Activated CD4-positive, alpha-beta memory T cell treated with anti-CD3 and anti-CD28 coated beads for 36 hours (primary cell): ENCODE measurements at regions of chr2 and their contacts with region 1.

Region 1: DNA sequence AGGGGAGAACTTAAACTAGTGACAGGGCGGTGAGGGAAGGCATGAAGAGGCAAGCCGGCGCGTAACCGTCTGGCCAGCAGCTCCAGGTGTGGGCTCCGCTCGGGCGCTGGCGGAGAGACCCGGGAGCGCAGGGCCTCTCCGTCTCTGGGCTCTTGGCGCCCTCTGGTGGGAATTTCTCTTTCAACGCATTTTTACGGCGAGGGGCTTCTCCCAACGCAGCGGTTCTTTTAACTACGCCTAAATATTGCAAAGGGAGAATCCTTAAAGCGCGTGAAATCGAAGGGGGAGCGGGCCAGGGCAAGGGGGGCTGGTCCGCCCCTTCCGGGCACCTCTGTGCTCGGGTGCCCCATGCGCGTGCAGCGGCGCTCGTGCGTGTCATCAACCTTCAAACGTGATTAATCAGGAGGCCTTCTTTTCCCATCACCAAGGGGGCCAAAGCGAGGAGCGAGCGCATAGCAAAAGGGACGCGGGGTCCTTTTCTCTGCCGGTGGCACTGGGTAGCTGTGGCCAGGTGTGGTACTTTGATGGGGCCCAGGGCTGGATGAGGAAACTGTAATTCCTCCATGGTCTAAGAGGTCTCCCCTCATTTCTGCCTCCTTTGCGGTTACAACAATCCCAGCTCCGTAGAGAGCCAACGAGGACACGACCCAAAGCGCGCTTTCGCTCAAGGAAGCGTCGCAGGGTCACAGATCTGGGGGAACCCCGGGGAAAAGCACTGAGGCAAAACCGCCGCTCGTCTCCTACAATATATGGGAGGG is 762 bp upstream of the GAD1 start:
- DNase-seq: peak; percentile 78
- H3K4me3 Mint-ChIP-seq: peak overlapping the region; percentile 64
- H3K27ac Mint-ChIP-seq: peak overlapping the region; percentile 11
- H3K4me1 Mint-ChIP-seq: peaks cover 43% of the 10 kb centered on the region
- H3K27me3 Mint-ChIP-seq: peaks cover 72% of the 10 kb centered on the region

Region 2: DNA sequence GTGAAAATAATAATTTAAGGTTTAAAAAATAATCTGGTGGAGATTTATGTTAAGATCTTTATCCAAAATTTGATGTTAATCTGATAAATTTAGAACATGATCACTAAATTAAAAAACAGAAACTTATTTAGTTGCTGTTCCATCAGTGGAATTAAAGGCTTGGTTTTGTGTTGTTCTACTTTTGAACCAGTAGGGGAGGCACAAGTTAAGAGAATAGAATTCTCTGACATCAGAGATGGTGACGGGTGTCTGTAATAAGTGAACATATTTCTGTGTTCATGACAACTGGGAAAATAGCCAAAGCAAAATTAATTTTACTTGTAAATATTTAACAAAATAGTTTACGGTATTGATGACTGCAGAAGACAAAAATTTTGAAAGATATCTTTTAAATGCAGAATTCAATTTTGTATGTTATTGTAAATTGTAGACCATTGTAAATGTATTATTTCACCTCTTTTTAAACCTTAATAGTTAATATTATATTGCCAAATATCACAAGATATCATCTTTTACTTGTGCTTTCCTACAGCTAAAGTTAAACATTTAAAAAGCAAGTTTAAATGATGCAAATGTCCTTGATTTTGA is 882.7 kb before region 1 on chr2:
- CTCF ChIA-PET with region 1: interaction called, 3 read pairs
- POLR2A ChIA-PET with region 1: no interaction called
- intact Hi-C with region 1: loop called (anchors 10 kb)
- DNase-seq: no peak
- H3K4me3 Mint-ChIP-seq: no peak overlapping the region
- H3K27ac Mint-ChIP-seq: no peak overlapping the region
- H3K4me1 Mint-ChIP-seq: no peaks in the 10 kb centered on the region
- H3K27me3 Mint-ChIP-seq: no peaks in the 10 kb centered on the region

Region 3: DNA sequence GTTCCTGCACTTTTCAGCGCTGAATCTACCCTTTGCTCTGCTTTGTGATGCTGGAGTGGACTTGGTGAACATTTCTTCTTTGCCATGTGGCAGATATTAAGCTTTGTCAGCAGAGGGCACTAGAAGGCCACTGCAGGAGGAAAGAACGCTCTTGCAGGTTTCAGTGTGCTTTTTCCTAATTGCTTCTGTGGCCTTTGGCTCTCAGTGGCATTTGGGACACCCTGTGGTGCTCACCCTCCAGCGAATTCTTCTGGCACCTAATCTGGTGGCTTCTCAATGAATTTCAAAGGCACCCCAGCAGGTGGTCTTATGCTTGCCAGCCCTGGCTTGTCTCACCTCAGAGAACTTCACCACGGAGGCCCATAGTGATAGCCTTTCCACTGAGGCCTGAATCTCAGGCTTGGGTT is 491.3 kb before region 1 on chr2:
- CTCF ChIA-PET with region 1: interaction called, 26 read pairs
- POLR2A ChIA-PET with region 1: no interaction called
- intact Hi-C with region 1: loop called (anchors 2 kb)
- DNase-seq: peak; percentile 41
- H3K4me3 Mint-ChIP-seq: no peak overlapping the region
- H3K27ac Mint-ChIP-seq: no peak overlapping the region
- H3K4me1 Mint-ChIP-seq: no peaks in the 10 kb centered on the region
- H3K27me3 Mint-ChIP-seq: peaks cover 7% of the 10 kb centered on the region

Region 4: DNA sequence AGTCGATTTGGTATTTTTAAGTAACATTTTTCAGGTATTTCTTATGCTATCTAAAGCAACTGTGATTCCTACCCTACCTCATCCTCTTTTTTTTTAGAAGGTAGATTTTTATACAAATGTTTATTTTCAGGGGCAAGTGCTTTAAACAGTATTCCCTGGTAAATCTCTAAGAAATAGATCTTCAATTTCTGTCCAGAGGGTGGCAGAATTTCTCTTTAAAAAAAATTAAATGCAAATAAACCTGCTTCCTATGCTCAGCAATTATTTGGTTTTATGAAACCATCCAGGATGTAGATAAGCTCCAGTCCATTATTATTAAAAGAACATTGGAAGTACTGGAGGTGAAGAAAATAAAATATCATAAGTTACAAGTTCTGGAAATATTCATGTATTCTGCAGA is 446.0 kb before region 1 on chr2:
- CTCF ChIA-PET with region 1: interaction called, 29 read pairs
- POLR2A ChIA-PET with region 1: interaction called, 3 read pairs
- intact Hi-C with region 1: no loop called
- DNase-seq: no peak
- H3K4me3 Mint-ChIP-seq: no peak overlapping the region
- H3K27ac Mint-ChIP-seq: no peak overlapping the region
- H3K4me1 Mint-ChIP-seq: peaks cover 19% of the 10 kb centered on the region
- H3K27me3 Mint-ChIP-seq: peaks cover 46% of the 10 kb centered on the region

Region 5: DNA sequence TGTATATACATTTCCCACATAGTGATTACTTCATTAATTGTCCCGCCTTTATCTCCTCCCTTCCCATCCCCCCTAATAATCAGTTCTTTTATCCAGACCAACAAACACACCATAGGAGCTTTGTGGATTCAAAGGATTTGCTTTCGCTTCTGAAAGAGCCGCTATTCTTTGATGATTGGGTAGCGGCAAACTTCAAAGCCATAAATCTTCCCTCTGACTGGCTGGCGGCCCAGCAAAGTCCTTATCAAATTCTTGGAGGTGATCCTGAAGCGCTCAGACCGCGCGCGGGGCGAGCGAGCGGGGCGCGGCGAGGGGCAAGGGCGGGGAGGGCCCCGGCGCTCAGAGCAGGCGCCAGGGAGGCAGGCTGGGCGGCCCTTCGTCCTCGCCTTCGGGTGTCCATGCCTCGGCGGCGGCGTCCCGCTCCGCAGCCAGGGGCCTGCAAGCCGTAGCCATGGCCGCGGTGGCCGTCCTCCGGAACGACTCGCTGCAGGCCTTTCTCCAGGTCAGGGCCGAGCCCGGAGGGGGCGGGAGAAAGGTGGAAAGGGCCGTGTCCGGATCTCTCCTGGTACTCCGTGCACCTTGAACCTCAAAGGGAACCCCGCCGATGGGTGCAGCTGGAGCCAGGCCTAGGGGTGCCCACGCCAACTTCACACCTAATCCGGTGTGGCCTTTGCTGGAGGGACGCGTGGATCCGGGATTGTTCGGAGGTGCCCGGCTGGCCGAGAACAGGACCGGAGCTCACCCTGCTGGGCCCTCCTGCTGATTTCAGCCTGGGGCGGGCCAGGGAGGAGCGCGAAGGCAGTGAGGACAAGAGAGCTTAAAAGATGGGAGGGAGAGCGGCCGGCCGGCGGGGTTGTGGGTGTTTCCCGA is 100.6 kb before region 1 on chr2 and contains the start of gene SP5:
- CTCF ChIA-PET with region 1: interaction called, 18 read pairs
- POLR2A ChIA-PET with region 1: no interaction called
- intact Hi-C with region 1: loop called (anchors 1 kb)
- DNase-seq: peak; percentile 40
- H3K4me3 Mint-ChIP-seq: peak within 1 kb of the TSS; percentile 69
- H3K27ac Mint-ChIP-seq: no peak within 1 kb of the TSS
- H3K4me1 Mint-ChIP-seq: peaks cover 37% of the 10 kb centered on the region
- H3K27me3 Mint-ChIP-seq: peaks cover 68% of the 10 kb centered on the region
- total RNA-seq, gene SP5: not detected

Region 6: GRCh38 chr2:170873035-170873692 is 57.2 kb after region 1 on chr2:
- CTCF ChIA-PET with region 1: interaction called, 15 read pairs
- POLR2A ChIA-PET with region 1: no interaction called
- intact Hi-C with region 1: loop called (anchors 2 kb)
- DNase-seq: peak; percentile 85
- H3K4me3 Mint-ChIP-seq: peak overlapping the region; percentile 44
- H3K27ac Mint-ChIP-seq: no peak overlapping the region
- H3K4me1 Mint-ChIP-seq: peaks cover 11% of the 10 kb centered on the region
- H3K27me3 Mint-ChIP-seq: no peaks in the 10 kb centered on the region